ENCODE measurements at regions of chr12 and their contacts with region 1.

Region 1: DNA sequence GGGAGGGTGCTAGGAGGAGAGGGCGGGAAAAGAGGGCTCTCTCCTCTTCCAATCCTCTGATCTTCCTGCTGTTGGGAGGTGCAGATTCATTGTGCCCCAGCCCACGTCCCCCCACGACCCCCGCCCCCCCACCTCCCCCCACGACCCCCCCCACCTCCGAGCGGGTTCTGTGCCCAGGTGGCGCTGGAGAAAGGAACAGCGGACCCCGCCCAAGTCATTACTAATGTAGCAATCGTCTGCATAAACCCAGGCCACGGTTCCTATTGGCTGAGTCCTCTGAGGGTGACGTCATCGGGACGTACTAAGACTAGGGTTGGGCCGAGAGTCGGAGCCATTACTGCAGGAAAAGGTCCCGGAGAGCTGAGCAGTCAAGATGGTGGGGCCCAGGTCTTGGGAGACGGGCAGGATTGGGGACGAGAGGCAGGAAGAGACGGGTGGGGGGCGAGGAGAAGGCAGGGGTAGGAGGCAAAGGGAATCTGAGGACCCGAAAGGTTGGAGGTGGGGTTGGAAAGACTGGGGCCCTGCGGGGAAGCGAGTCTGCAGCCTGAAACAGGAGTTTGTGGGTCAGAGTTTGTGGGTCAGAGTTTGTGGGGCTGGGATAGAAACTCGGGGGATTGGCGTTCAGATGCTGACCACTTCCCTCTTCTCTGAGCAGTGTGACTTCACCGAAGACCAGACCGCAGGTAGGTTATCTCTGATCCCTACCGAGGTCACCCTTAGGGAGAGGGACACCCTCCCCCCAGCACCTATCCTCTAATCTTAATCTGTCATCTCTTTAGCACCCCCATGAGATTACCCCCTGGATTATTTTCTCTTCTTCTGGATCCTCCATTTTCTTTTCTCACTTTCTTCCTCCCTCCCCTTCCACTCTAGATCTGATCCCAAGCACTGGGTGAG is at the start of gene MYL6:
- DNase-seq: peak; percentile 95 to 98 (median 96)
- ATAC-seq: peak; percentile 90 to 91
- H3K4me3 ChIP-seq: peak within 1 kb of the TSS; percentile 95
- H3K27ac ChIP-seq: peak within 1 kb of the TSS; percentile 87
- H3K4me1 ChIP-seq: peaks cover 4% of the 10 kb centered on the region
- H3K27me3 ChIP-seq: no peaks in the 10 kb centered on the region
- total RNA-seq, gene MYL6: 592 to 1,178 (median 826) TPM

Region 2: DNA sequence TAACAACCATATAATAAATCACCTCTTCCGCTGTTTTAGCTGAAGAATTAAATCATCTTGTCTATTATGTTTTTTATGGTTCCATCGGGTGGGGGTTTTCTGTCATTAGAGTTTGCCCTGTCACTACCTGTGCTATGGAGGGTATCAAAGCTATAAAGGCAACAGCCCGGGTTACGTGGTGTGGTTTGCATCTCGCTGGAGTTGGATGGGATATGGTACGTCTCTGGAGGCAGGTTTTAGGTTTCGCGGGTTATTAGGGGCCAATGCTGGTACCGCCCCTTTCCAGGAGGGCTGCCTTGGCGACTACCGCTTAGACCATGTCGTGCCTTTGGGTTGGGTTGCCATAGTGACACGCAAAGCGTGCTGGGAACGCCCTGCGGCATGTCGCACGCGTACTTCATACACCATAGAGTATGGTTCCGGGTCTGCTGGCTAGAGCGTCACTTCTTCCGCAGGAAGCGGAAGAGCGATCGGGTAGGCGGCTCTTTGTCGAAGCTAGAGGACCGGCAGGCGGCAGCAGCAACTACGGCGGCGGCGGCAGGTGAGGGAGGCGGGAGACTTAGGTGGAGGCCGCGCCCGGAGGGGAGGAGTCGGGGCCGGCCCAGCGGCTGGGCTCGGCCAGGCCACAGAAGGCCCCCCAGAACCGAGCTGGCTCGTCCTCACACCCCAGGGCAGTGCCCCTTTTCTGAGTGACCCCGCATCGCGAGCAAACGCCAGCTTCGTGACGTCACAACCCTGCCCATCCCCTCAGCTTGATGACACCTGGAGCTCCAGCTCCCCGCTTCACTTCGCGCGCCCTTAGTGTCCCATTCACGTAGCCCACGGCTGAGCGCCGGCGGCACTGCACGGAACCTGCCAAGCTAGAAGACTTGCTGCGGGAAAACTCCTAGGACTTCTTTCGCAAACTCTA is 40.2 kb before region 1 on chr12 and contains the start of gene ZC3H10:
- intact Hi-C with region 1: loop called in 2 of 4 experiments (anchors 5 kb)
- DNase-seq: peak; percentile 98 to 99 (median 98)
- ATAC-seq: peak; percentile 90
- H3K4me3 ChIP-seq: peak within 1 kb of the TSS; percentile 96
- H3K27ac ChIP-seq: peak within 1 kb of the TSS; percentile 99
- H3K4me1 ChIP-seq: peaks cover 6% of the 10 kb centered on the region
- H3K27me3 ChIP-seq: no peaks in the 10 kb centered on the region
- total RNA-seq, gene ZC3H10: 6.1 to 8.6 (median 6.7) TPM

Region 3: DNA sequence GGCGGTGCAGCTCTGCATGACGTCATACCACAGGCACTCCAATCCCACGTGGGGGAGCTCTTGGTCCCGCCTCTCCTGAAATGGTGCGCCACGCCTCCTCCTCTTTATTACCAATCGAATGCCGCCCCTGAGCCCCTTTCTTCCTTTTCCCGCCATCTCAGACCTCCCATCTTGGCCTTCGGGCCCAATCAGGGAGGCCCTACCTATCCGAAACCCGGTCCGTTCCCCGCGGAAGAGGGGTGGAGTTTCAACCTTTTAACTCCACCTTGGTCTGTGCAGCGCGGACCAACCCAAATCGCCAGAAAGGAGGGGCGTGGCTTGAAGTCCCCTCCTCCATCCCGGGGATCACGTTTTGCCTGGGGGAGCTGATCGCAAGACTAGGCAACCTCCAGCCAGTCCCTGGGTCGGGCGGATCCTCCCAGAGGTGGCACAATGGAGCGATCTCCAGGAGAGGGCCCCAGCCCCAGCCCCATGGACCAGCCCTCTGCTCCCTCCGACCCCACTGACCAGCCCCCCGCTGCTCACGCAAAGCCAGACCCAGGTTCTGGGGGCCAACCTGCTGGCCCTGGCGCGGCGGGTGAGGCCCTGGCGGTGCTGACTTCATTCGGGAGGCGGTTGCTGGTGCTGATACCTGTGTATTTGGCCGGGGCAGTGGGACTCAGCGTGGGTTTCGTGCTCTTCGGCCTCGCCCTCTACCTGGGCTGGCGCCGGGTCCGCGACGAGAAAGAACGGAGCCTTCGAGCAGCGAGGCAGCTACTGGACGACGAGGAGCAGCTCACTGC is 30.2 kb before region 1 on chr12 and contains the start of gene ESYT1:
- intact Hi-C with region 1: loop called in 2 of 4 experiments (anchors 2 to 5 kb)
- DNase-seq: peak; percentile 98 to 99 (median 99)
- ATAC-seq: peak; percentile 96 to 97
- H3K4me3 ChIP-seq: peak within 1 kb of the TSS; percentile 76
- H3K27ac ChIP-seq: peak within 1 kb of the TSS; percentile 85
- H3K4me1 ChIP-seq: no peaks in the 10 kb centered on the region
- H3K27me3 ChIP-seq: no peaks in the 10 kb centered on the region
- total RNA-seq, gene ESYT1: 30.7 to 38.5 (median 33.6) TPM

Measured in right cardiac atrium (tissue), 5 donors.